IMR-90 (cell line): ENCODE measurements at regions of chr9 and their contacts with region 1.

Region 1: DNA sequence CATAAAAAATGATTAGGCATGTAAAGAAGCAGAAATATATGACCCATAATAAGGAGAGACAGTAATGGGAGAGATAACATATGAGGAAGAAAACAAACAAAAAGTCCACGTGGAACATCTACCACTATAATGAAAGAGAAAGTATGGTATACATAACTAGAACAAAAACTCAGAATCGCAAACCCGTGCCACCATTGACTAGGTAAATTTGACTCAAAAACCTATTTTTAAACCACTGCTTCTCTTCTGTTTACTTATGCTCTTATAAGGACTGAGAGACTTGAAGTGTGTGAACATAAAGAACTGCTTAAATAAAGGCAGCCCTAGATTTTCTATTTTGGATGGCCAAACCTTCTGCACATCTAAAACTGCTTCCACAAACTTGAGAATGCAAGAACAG is 330.7 kb downstream of the CAAP1 start:
- DNase-seq: no peak
- ATAC-seq: no peak
- H3K4me3 ChIP-seq: no peak overlapping the region
- H3K27ac ChIP-seq: no peak overlapping the region
- H3K4me1 ChIP-seq: no peaks in the 10 kb centered on the region
- H3K27me3 ChIP-seq: no peaks in the 10 kb centered on the region
- CTCF ChIP-seq: no peak
- POLR2A ChIP-seq: no peak
- RAD21 ChIP-seq: no peak

Region 2: DNA sequence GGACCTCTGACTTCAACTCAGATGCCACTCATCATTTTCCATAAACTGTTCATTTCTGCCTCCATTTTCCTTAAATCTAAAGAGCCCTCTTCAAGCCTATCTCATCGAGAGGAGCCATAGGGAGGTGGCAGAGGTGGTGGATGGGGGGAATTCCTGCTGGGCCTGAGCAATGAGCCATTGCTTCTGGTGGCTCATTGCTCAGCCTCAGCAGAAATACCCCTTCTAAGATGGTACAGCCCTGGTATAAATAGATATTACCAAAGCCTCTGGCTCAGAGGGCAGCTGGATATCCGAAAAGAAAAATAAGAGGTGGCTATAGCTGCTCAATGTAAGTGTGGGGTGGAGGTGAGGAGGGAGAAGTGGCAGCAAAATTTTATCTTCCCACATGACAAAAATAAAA is 17.1 kb after region 1 on chr9:
- CTCF ChIA-PET with region 1: no interaction called
- POLR2A ChIA-PET with region 1: no interaction called
- dilution Hi-C with region 1: no loop called
- in situ Hi-C with region 1: no loop called
- intact Hi-C with region 1: no loop called
- DNase-seq: no peak
- ATAC-seq: no peak
- H3K4me3 ChIP-seq: no peak overlapping the region
- H3K27ac ChIP-seq: no peak overlapping the region
- H3K4me1 ChIP-seq: no peaks in the 10 kb centered on the region
- H3K27me3 ChIP-seq: no peaks in the 10 kb centered on the region
- CTCF ChIP-seq: no peak
- POLR2A ChIP-seq: no peak
- RAD21 ChIP-seq: no peak

Region 3: DNA sequence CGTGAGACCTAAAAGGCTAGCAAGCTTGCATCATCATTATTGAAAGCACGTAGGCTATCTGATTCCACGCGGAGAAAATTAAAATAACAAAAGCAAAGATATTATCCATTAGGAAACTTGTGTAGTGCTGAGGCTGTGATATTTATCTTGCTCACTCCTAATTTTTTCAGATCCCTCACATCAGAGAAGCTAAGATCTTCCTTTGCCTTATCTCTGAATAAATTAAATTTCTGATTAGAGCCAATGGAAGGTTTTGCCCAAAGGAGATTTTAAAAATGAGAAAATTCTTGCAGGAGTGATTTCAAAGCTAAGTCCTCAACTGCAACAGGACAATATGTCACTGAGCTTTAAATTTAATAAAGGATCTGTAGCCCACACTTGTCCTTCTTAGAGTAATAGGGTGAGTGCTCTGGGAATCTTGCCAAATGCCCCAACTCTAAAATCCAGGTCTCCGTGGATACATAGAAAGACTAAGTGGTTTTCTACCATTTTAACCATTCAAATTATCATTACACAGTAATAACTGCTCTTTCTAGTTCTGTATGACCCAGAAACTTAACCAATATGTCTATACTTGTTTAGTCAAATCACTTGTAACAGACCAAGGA is 35.7 kb after region 1 on chr9:
- CTCF ChIA-PET with region 1: no interaction called
- POLR2A ChIA-PET with region 1: no interaction called
- dilution Hi-C with region 1: no loop called
- in situ Hi-C with region 1: no loop called
- intact Hi-C with region 1: loop called (anchors 2 kb)
- DNase-seq: no peak
- ATAC-seq: no peak
- H3K4me3 ChIP-seq: no peak overlapping the region
- H3K27ac ChIP-seq: no peak overlapping the region
- H3K4me1 ChIP-seq: no peaks in the 10 kb centered on the region
- H3K27me3 ChIP-seq: no peaks in the 10 kb centered on the region
- CTCF ChIP-seq: no peak
- POLR2A ChIP-seq: no peak
- RAD21 ChIP-seq: no peak

Region 4: DNA sequence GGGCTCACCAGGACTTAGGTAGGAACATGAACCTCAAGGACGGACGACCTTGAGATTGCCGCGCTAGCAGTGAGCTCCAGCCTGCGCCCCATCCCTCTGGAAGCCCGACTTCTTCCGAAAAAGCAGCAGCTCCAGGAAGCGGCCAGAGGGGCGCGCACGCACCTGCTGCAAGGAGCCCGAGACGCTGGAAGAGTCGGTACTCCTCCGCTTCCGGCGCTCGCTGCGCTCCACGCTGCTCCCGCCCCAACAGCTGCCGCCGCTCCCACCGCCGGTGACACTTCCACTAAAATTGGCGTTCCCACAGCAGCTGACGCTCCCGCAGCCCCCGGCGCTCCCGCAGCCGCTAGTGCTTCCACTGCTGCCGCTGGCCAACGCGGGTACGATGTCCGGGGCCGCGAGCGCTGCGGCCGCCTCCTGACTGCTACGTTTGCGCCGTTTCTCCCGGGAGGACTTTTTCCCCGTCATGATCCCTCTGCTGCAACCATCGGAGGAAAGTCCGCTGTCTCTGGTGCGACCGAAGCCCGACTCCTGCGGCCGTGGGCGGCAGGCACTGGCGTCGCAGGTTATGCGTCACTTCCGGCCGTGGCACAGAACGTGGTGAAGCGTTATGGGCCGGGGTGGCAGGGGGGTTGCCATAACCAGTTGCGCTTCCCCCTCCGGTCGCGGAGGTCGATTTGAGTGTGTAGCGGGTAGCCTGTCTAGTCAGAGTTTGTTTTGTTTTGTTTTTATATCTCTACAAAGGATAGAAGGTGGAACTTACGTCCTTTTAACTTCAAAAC is 330.5 kb after region 1 on chr9 and contains the start of gene CAAP1:
- CTCF ChIA-PET with region 1: no interaction called
- POLR2A ChIA-PET with region 1: no interaction called
- dilution Hi-C with region 1: no loop called
- in situ Hi-C with region 1: no loop called
- intact Hi-C with region 1: no loop called
- DNase-seq: peak; percentile 92
- ATAC-seq: peak; percentile 96
- H3K4me3 ChIP-seq: peak within 1 kb of the TSS; percentile 84
- H3K27ac ChIP-seq: peak within 1 kb of the TSS; percentile 81
- H3K4me1 ChIP-seq: no peaks in the 10 kb centered on the region
- H3K27me3 ChIP-seq: no peaks in the 10 kb centered on the region
- CTCF ChIP-seq: peak; percentile 49
- POLR2A ChIP-seq: peak; percentile 92
- RAD21 ChIP-seq: peak; percentile 49
- total RNA-seq, gene CAAP1: 6.1 and 12.2 TPM in 2 replicates